ENCODE measurements at regions of chr3 and their contacts with region 1.

Region 1: GRCh38 chr3:192054881-192055280 is 593.9 kb downstream of the PYDC2 start:
- DNase-seq: peak; percentile 85
- H3K4me3 ChIP-seq: peak overlapping the region in 1 of 3 experiments; percentile 9
- H3K27ac ChIP-seq: peak overlapping the region; percentile 85
- H3K4me1 ChIP-seq: peaks cover 27% of the 10 kb centered on the region
- H3K27me3 ChIP-seq: no peaks in the 10 kb centered on the region
- CTCF ChIP-seq: no peak
- POLR2A ChIP-seq: no peak

Region 2: DNA sequence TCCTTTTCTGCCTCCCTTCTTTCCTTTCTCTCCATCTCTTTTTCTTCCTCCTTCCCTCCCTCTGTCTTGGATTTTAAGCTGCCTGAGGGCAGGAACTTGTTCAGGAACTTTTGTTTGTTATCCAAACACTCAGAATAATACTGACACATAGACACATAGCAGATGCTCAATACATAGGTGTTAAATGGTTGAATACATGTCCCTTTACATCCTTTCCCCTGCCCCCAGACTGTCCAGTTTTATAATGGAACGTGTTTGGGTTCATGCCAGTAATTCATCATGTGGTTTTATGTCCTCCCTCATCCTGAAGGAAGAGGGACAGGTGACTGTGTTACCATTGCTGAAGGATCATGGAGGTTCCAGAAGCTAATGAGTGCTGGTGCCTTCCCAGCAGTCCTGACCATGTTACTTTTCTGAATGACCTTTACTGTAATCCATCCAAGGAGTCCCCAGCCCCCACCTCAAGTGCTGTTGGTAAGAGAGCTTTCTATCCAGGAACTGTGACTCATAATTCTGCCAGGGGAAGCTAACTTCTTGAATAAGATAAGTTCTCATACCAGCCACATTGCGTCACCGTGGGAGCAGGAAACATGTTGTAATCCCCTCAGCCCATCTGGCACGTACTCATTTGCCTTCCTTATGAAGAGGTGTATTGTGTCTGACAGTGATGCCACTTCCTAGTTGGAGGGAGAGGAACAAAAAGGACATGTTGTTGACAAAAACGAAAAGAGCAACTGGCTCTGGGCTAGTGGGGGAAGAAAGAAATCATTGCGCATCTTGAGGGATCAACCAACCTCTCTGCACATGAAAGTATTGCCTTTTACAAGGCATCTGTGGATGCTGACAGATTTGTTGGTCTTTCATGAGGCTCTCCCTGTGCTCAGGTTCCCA is 1488.6 kb before region 1 on chr3:
- CTCF ChIA-PET with region 1: no interaction called
- POLR2A ChIA-PET with region 1: no interaction called
- dilution Hi-C with region 1: no loop called
- intact Hi-C with region 1: loop called (anchors 5 kb)
- DNase-seq: peak; percentile 99
- H3K4me3 ChIP-seq: no peak overlapping the region
- H3K27ac ChIP-seq: peak overlapping the region; percentile 97
- H3K4me1 ChIP-seq: peaks cover 15% of the 10 kb centered on the region
- H3K27me3 ChIP-seq: no peaks in the 10 kb centered on the region
- CTCF ChIP-seq: no peak
- POLR2A ChIP-seq: no peak

Region 3: DNA sequence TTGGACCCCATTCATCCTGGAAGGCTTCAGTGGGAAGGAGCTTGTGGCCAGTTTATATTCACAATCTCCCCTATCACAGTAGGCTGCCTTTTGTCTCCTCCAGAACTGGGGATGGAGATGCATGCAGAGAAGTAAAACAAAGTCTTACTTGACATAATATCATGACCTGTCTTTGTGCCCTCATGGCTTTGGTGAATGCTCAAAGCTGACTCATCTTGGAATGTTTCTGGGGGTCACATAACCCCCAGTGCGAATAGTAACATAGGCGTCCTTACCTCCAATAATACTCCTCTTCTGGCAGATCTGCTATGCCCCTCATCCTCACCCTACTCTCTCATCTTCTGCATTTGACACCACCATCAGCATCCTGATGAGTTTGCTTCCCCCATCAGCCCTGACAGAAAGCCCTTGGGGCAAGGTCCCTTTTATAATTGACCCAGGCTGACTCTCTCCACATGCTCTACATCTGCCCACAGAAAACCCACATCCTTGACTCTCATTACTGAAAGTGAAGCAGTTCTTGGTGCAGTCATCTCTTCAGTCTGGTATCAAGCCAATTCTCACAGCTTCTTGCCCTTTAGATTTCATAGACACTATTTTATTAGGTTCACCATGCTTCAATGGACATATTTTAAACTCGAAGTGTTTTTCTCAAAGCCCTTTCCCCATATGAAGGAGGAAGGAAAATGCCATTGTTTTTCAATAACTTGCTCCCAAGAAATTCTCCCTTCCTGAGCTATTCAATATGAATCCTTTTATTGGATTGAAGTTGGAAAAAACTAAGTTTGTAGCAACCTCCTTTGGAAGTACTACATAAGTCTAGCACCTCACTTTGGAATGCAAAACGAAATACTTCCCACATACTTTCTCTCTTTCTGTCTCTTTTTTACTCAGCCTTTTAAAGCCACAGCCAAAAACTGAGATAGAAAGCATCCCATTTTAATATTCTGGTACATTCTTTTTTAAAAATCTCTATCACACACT is 819.3 kb before region 1 on chr3:
- CTCF ChIA-PET with region 1: no interaction called
- POLR2A ChIA-PET with region 1: no interaction called
- dilution Hi-C with region 1: no loop called
- intact Hi-C with region 1: loop called (anchors 2 kb)
- DNase-seq: no peak
- H3K4me3 ChIP-seq: no peak overlapping the region
- H3K27ac ChIP-seq: no peak overlapping the region
- H3K4me1 ChIP-seq: peaks cover 42% of the 10 kb centered on the region
- H3K27me3 ChIP-seq: no peaks in the 10 kb centered on the region
- CTCF ChIP-seq: no peak
- POLR2A ChIP-seq: no peak

Region 4: DNA sequence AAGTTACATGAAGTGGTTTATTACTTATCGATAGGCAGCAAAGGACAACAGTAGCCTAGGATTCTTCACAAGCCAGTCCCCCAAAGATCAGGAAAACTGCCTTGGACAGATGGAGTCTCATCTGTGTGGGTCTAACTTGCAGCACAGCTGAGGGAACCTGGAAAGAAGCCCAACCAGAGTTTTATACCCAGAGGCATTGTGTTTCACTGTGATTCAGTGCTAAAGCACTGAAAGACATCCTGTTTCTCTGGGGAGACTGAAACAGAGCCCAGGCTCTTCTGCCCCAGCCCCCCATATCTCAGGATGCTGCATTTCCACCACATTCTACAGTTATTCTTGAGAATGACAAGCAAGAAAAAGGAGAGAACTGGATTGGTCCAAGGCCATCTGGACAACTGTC is 642.1 kb before region 1 on chr3:
- CTCF ChIA-PET with region 1: no interaction called
- POLR2A ChIA-PET with region 1: no interaction called
- dilution Hi-C with region 1: no loop called
- intact Hi-C with region 1: loop called (anchors 2 kb)
- DNase-seq: peak; percentile 97
- H3K4me3 ChIP-seq: no peak overlapping the region
- H3K27ac ChIP-seq: peak overlapping the region; percentile 25
- H3K4me1 ChIP-seq: peaks cover 11% of the 10 kb centered on the region
- H3K27me3 ChIP-seq: no peaks in the 10 kb centered on the region
- CTCF ChIP-seq: no peak
- POLR2A ChIP-seq: no peak

Region 5: GRCh38 chr3:192188218-192188835 is 133.4 kb after region 1 on chr3:
- CTCF ChIA-PET with region 1: no interaction called
- POLR2A ChIA-PET with region 1: no interaction called
- dilution Hi-C with region 1: no loop called
- intact Hi-C with region 1: loop called (anchors 2 kb)
- DNase-seq: peak; percentile 46
- H3K4me3 ChIP-seq: no peak overlapping the region
- H3K27ac ChIP-seq: no peak overlapping the region
- H3K4me1 ChIP-seq: peaks cover 13% of the 10 kb centered on the region
- H3K27me3 ChIP-seq: no peaks in the 10 kb centered on the region
- CTCF ChIP-seq: peak; percentile 72 to 73
- POLR2A ChIP-seq: no peak

Region 6: GRCh38 chr3:192957441-192958021 is 902.6 kb after region 1 on chr3:
- CTCF ChIA-PET with region 1: no interaction called
- POLR2A ChIA-PET with region 1: no interaction called
- dilution Hi-C with region 1: no loop called
- intact Hi-C with region 1: loop called (anchors 5 kb)
- DNase-seq: peak; percentile 90
- H3K4me3 ChIP-seq: peak overlapping the region in 1 of 3 experiments; percentile 24
- H3K27ac ChIP-seq: peak overlapping the region; percentile 92
- H3K4me1 ChIP-seq: peaks cover 21% of the 10 kb centered on the region
- H3K27me3 ChIP-seq: no peaks in the 10 kb centered on the region
- CTCF ChIP-seq: no peak
- POLR2A ChIP-seq: no peak

Measured in endothelial cell of umbilical vein (primary cell).